Heart left ventricle (tissue), 16 donors: ENCODE measurements at regions of chr2 and their contacts with region 1.

Region 1: DNA sequence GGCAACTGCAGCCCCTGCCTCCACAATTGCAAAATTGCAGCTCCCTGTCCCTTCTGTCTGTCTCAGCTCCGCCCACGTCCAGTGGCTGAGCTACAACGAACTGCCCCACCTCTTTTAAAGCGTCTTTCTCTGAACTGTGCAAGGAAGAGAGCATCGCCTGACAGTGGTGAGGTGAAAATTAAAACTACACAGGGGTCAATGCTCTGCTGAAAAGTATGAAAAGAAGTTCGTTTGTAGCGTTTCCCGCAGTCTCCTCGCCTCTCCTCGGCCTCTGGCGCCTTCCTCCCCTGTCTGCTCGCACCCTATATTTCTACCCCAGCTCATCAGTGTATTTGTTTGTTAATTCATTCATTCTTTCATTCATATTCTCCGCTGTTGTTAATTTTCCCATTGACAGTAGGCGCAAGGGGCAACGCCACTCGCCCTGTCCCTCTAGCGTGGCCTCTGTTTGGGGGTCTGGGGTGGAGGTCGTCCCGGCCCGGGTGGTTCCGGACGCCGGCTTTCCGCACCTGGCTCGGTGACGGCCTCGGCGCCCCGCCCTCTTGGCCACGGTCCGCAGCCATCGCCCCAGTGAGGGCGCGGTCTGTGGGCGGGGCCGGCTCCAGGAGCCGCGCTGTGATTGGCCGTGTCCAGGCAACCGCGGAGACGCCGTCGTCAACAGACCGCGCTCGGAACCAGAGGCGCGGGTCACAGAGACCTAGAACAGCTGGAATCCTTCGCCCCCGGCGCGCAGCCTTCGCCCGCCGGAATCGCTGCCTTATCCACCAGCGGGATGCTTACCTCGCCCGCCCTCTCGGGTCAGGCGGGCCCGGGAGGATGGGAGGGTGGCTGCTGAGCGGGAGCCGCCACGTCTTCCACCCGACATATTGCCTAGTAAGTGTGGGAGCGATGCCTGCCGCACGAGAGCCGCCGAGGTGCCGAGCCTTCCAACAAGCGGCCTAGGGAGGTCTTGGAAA is at the start of gene VWA3B:
- DNase-seq: peak; percentile 72 to 89 (median 77)
- ATAC-seq: peak; percentile 89 to 99 (median 96)
- H3K4me3 ChIP-seq: peak within 1 kb of the TSS; percentile 1 to 67 (median 54)
- H3K27ac ChIP-seq: peak within 1 kb of the TSS in 1 of 12 donors; percentile 73
- H3K4me1 ChIP-seq: peaks cover 0 to 54% (median 13%) of the 10 kb centered on the region in 12 donors
- H3K27me3 ChIP-seq: peaks cover 0 to 28% (median 5%) of the 10 kb centered on the region in 9 donors
- CTCF ChIP-seq: no peak
- POLR2A ChIP-seq: no peak
- total RNA-seq, gene VWA3B: 0.12 to 0.61 (median 0.39) TPM in 8 of 9 donors, not detected in the other

Region 2: DNA sequence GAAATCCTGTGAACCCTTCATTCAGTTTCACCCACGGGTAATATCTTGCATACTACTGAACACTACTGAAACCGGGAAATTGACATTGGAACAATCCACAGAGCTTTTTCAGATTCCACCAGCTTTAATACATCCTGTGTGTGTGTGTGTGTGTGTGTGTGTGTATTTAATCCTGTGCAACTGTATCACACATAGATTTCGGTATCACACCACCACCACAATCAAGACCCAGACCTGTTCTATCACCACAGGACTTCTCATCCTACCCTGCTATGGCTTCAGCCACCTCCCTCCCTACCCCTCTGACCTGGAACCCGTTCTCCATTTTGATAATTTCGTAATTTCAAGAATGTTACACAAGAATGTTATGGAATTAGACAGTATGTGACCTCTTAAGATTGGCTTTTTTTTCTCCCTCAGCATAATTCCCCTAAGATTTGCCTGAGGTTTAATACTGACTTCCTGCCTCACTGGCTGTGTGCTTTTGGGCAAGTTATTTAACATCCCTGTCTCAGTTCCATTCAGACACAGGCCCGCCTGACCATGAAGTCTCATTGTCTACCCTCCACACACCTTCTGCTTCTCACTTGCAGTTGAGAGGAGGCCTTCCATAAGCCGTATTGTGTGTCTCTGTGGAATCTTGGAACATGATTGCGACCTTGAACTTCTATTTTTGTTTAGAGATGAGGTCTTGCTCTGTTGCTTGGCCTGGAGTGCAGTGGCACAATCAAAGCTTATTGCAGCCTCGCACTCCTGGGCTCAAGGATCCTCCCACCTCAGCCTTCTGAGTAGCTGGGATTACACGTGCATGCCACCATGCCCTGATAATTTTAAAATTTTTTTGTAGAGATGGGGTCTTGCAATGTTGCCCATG is 76.6 kb before region 1 on chr2:
- intact Hi-C with region 1: loop called in 1 of 10 experiments (anchors 10 kb)
- DNase-seq: no peak
- ATAC-seq: peak in 2 of 4 donors; percentile 31 to 41
- H3K4me3 ChIP-seq: no peak overlapping the region
- H3K27ac ChIP-seq: peak overlapping the region in 9 of 12 donors; percentile 18 to 69 (median 54)
- H3K4me1 ChIP-seq: peaks cover 0 to 38% (median 10%) of the 10 kb centered on the region in 12 donors
- H3K27me3 ChIP-seq: no peaks in the 10 kb centered on the region
- CTCF ChIP-seq: no peak
- POLR2A ChIP-seq: no peak

Region 3: DNA sequence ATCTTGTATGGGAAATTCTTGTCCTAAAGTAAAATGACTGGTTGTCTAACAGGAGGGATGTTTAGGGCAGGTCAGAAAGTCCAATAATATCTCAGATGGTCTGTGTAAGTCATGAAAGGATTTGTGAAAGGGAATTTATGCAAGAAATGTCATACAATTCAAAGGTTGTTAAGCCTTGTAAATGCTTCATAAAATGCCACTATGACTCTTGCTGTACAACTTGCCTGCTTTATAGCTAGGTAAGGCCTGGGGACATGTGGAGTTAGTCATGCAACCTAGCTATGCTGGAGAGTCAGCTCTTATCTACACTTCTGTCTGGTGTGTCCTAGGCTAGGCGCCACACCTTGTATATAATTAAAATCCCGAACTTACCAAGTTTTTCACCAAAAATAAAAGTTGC is 36.7 kb before region 1 on chr2:
- intact Hi-C with region 1: no loop called
- DNase-seq: no peak
- ATAC-seq: no peak
- H3K4me3 ChIP-seq: no peak overlapping the region
- H3K27ac ChIP-seq: no peak overlapping the region
- H3K4me1 ChIP-seq: no peaks in the 10 kb centered on the region
- H3K27me3 ChIP-seq: peaks cover 0 to 5% (median 0%) of the 10 kb centered on the region in 9 donors
- CTCF ChIP-seq: no peak
- POLR2A ChIP-seq: no peak